Aorta (tissue), 5 donors: ENCODE measurements at regions of chr15 and their contacts with region 1.

Region 1: DNA sequence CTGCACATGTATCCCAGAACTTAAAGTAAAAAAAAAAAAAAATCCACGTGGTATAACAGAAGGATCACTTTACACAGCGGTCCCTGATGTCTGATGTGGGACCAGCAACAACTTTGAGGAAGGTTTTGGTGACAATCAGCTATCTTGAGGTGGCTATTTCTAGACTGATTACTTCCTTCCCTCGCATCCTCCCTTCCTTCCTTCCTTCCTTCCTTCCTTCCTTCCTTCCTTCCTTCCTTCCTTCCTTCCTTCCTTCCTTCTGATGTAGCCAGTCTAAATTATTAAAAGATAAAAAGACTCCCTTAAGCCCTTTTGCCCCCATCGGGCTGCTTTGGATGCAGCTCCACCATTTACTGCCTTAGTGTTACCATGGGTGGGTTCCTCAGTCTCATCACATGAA is 14.9 kb downstream of the SORD start:
- DNase-seq: no peak
- ATAC-seq: no peak
- H3K4me3 ChIP-seq: no peak overlapping the region
- H3K27ac ChIP-seq: no peak overlapping the region
- H3K4me1 ChIP-seq: peaks cover 0 to 1% of the 10 kb centered on the region in 2 donors
- H3K27me3 ChIP-seq: no peaks in the 10 kb centered on the region

Region 2: GRCh38 chr15:44968475-44968874 is 69.5 kb before region 1 on chr15:
- intact Hi-C with region 1: loop called in 1 of 2 experiments (anchors 5 kb)
- DNase-seq: no peak
- ATAC-seq: no peak
- H3K4me3 ChIP-seq: no peak overlapping the region
- H3K27ac ChIP-seq: no peak overlapping the region
- H3K4me1 ChIP-seq: no peaks in the 10 kb centered on the region
- H3K27me3 ChIP-seq: no peaks in the 10 kb centered on the region